ENCODE measurements at regions of chr6 and their contacts with region 1.

Region 1: GRCh38 chr6:29705389-29706231 is 17.6 kb upstream of the HLA-F start:
- DNase-seq: peak; percentile 64
- H3K4me3 Mint-ChIP-seq: no peak overlapping the region
- H3K27ac Mint-ChIP-seq: no peak overlapping the region
- H3K4me1 Mint-ChIP-seq: peaks cover 8% of the 10 kb centered on the region
- H3K27me3 Mint-ChIP-seq: peaks cover 61% of the 10 kb centered on the region
- CTCF ChIP-seq: peak; percentile 71

Region 2: DNA sequence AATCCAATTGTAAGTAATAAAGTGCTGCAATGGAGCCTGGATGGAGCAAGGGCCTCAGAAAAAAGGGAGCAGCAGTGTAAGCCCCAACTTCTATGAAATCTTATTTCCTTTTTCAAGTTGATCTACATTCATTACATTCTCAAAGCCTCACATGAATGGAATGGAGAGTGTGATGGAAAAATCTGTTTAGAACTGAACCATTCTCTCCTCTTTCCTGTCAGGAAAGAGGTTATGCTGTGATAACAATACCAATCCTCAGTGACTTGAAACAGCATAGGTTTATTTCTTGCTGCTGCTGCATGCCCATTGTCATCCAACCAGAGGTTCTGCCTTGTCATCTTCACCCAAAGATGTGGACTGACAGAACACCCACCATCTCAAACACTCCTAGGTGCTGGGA is 129.6 kb before region 1 on chr6:
- CTCF ChIA-PET with region 1: no interaction called
- intact Hi-C with region 1: no loop called
- DNase-seq: no peak
- H3K4me3 Mint-ChIP-seq: no peak overlapping the region
- H3K27ac Mint-ChIP-seq: no peak overlapping the region
- H3K4me1 Mint-ChIP-seq: peaks cover 9% of the 10 kb centered on the region
- H3K27me3 Mint-ChIP-seq: no peaks in the 10 kb centered on the region
- CTCF ChIP-seq: no peak

Region 3: GRCh38 chr6:29752451-29753308 is 47.1 kb after region 1 on chr6:
- CTCF ChIA-PET with region 1: interaction called, 5 read pairs
- intact Hi-C with region 1: loop called (anchors 5 kb)
- DNase-seq: peak; percentile 93
- H3K4me3 Mint-ChIP-seq: peak overlapping the region; percentile 79
- H3K27ac Mint-ChIP-seq: no peak overlapping the region
- H3K4me1 Mint-ChIP-seq: peaks cover 37% of the 10 kb centered on the region
- H3K27me3 Mint-ChIP-seq: peaks cover 40% of the 10 kb centered on the region
- CTCF ChIP-seq: peak; percentile 94

Region 4: GRCh38 chr6:29834564-29835436 is 129.2 kb after region 1 on chr6:
- CTCF ChIA-PET with region 1: interaction called, 3 read pairs
- intact Hi-C with region 1: loop called (anchors 1 kb)
- DNase-seq: peak; percentile 73
- H3K4me3 Mint-ChIP-seq: no peak overlapping the region
- H3K27ac Mint-ChIP-seq: no peak overlapping the region
- H3K4me1 Mint-ChIP-seq: peaks cover 8% of the 10 kb centered on the region
- H3K27me3 Mint-ChIP-seq: peaks cover 81% of the 10 kb centered on the region
- CTCF ChIP-seq: peak; percentile 95

Region 5: GRCh38 chr6:30013291-30013922 is 307.8 kb after region 1 on chr6:
- CTCF ChIA-PET with region 1: no interaction called
- intact Hi-C with region 1: loop called (anchors 5 kb)
- DNase-seq: no peak
- H3K4me3 Mint-ChIP-seq: no peak overlapping the region
- H3K27ac Mint-ChIP-seq: no peak overlapping the region
- H3K4me1 Mint-ChIP-seq: no peaks in the 10 kb centered on the region
- H3K27me3 Mint-ChIP-seq: no peaks in the 10 kb centered on the region
- CTCF ChIP-seq: peak; percentile 97